OCI-LY7 (cell line): ENCODE measurements at regions of chr16 and their contacts with region 1.

Region 1: GRCh38 chr16:66516808-66517585 is 32.9 kb downstream of the TK2 start:
- DNase-seq: peak; percentile 95
- H3K4me3 ChIP-seq: peak overlapping the region; percentile 58
- H3K27ac ChIP-seq: peak overlapping the region; percentile 68
- H3K4me1 ChIP-seq: peaks cover 39% of the 10 kb centered on the region
- CTCF ChIP-seq: no peak

Region 2: DNA sequence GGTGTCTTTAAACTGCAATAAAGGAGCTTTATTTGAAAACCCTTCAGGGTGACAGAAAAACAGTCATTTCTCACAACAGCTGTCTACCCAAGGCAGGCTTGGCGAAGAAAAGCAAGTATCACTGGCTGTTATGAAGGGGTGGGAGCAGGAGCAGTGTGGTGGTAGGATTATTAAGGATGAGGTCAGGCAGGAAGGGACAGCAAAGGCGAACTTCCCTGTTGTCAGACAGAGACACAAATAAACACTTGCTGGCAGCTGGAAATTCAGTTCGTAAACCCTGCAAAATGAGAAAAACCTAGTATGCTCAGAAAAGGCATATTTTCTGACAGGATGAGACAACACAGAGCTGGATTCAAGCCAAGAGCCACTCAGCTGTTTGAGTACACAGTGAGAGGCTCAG is 566.8 kb before region 1 on chr16:
- CTCF ChIA-PET with region 1: no interaction called
- POLR2A ChIA-PET with region 1: no interaction called
- intact Hi-C with region 1: no loop called
- DNase-seq: no peak
- H3K4me3 ChIP-seq: no peak overlapping the region
- H3K27ac ChIP-seq: no peak overlapping the region
- H3K4me1 ChIP-seq: no peaks in the 10 kb centered on the region
- CTCF ChIP-seq: no peak

Region 3: DNA sequence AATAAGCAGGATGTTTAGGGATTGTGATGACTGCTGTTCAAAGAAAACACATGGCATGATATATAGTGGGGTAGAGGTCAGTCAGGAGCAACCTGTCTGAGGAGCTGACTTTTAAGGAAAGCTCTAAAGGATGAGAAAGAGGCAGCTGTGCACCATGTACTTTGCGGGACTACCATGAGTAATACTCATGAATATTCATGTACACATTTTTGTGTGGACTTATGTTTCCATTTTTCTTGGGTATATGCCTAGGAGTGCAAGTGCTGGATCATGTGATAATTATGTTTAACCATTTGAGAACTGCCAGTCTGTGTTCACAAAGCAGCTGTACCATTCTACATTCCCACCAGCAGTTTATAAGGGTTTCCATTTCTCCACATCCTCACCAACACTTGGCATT is 54.1 kb before region 1 on chr16:
- CTCF ChIA-PET with region 1: no interaction called
- POLR2A ChIA-PET with region 1: no interaction called
- intact Hi-C with region 1: no loop called
- DNase-seq: no peak
- H3K4me3 ChIP-seq: no peak overlapping the region
- H3K27ac ChIP-seq: no peak overlapping the region
- H3K4me1 ChIP-seq: no peaks in the 10 kb centered on the region
- CTCF ChIP-seq: no peak

Region 4: DNA sequence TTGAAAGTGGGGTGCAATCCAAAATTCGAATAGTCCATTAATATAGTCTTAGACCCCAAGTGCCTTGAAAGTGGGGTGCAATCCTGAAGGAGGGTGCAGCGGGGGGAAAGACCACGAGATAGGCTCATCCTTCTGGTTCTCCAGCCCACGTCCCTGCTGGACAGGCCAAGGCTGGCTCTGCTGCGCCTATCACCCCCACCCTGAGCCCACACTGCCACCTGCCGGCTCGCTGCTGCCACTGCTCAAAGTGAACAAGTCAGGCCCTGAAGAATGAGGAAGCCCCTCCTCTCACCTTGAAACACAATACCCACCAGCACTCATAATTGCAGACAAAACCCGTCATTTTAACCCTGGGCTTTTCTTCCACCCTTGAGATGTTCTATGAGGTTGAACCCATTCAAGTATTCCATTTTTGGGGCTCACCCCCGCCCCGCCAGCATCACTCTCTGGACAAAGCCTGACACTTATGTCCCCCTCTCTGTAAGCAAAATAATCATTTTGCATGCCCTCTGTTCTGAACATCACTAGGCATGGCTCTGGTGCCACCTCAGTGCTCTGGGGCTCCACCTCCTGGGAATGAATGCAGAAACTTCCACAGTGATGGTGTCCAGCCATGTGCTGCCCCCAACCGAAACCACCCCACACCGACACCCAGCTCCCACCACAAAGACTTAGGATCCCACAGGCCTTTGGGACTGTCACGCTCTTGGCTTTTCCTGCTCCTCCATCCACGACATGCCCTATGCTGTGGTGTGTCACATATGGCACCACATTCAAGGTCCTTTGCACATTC is 33.1 kb before region 1 on chr16:
- CTCF ChIA-PET with region 1: no interaction called
- POLR2A ChIA-PET with region 1: no interaction called
- intact Hi-C with region 1: loop called (anchors 1 kb)
- DNase-seq: peak; percentile 77
- H3K4me3 ChIP-seq: no peak overlapping the region
- H3K27ac ChIP-seq: no peak overlapping the region
- H3K4me1 ChIP-seq: peaks cover 6% of the 10 kb centered on the region
- CTCF ChIP-seq: peak; percentile 99

Region 5: GRCh38 chr16:66832661-66833305 is 315.8 kb after region 1 on chr16:
- CTCF ChIA-PET with region 1: no interaction called
- POLR2A ChIA-PET with region 1: no interaction called
- intact Hi-C with region 1: no loop called
- DNase-seq: no peak
- H3K4me3 ChIP-seq: no peak overlapping the region
- H3K27ac ChIP-seq: no peak overlapping the region
- H3K4me1 ChIP-seq: peaks cover 22% of the 10 kb centered on the region
- CTCF ChIP-seq: no peak